MCF 10A (cell line): ENCODE measurements at regions of chr2 and their contacts with region 1.

Region 1: DNA sequence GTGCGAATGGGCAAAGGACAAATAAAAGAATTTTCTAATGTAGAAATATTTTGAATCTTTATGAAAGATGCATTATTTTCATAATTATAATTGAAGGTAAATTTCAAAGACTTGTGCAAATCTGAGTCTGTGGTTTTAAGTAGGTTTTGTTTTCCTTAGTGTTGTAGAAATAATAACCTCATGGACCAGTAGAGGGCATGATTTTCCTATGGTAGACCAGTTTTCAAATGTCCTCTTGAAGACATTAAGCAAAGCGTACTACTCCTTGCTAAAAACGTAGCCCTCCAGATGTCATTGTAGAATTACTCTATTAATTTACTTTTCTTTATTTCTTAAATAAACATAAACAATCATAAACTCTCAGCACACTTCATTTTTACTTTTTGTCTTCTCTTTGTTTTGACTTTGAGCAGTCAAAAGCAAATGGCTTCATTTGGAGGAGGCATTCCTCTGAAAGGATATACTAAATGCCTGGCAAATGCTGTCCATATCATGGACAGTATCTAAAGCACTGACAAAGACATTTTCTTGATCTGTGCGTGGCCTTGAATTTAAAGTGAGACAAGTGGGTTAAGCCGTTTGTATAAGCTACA is 85.8 kb upstream of the FAM237A start:
- DNase-seq: peak; percentile 57
- H3K4me3 Mint-ChIP-seq: no peak overlapping the region
- H3K27ac Mint-ChIP-seq: no peak overlapping the region
- H3K4me1 Mint-ChIP-seq: peaks cover 6% of the 10 kb centered on the region
- H3K27me3 Mint-ChIP-seq: peaks cover 12% of the 10 kb centered on the region
- CTCF ChIP-seq: peak; percentile 49

Region 2: GRCh38 chr2:206392118-206392517 is 164.3 kb before region 1 on chr2:
- CTCF ChIA-PET with region 1: interaction called, 25 read pairs
- POLR2A ChIA-PET with region 1: interaction called, 3 read pairs
- intact Hi-C with region 1: loop called (anchors 1 kb)
- DNase-seq: peak; percentile 64
- H3K4me3 Mint-ChIP-seq: no peak overlapping the region
- H3K27ac Mint-ChIP-seq: no peak overlapping the region
- H3K4me1 Mint-ChIP-seq: no peaks in the 10 kb centered on the region
- H3K27me3 Mint-ChIP-seq: no peaks in the 10 kb centered on the region
- CTCF ChIP-seq: peak; percentile 44

Region 3: GRCh38 chr2:206585335-206585734 is 28.9 kb after region 1 on chr2:
- CTCF ChIA-PET with region 1: interaction called, 13 read pairs
- POLR2A ChIA-PET with region 1: no interaction called
- intact Hi-C with region 1: no loop called
- DNase-seq: no peak
- H3K4me3 Mint-ChIP-seq: no peak overlapping the region
- H3K27ac Mint-ChIP-seq: no peak overlapping the region
- H3K4me1 Mint-ChIP-seq: no peaks in the 10 kb centered on the region
- H3K27me3 Mint-ChIP-seq: no peaks in the 10 kb centered on the region
- CTCF ChIP-seq: no peak

Region 4: DNA sequence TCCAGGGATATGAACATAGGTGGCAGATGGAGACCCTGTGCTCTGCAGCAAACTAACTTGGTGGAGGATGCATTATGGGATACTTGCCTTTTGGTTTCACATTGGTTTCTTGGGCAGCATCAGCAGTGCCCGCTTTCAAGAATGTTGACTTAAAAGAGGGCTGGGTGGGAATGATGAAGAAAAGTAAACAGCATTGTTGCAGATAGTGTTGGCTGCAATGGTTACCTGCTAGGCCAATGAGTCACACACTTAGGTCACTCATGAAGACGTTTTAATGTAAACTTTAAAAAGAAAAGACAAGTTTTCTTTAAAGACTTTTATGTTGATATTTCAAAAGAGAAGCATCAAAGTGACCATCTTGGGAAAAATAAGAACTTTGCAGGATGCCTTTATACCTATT is 59.7 kb after region 1 on chr2:
- CTCF ChIA-PET with region 1: no interaction called
- POLR2A ChIA-PET with region 1: no interaction called
- intact Hi-C with region 1: no loop called
- DNase-seq: peak; percentile 55
- H3K4me3 Mint-ChIP-seq: no peak overlapping the region
- H3K27ac Mint-ChIP-seq: no peak overlapping the region
- H3K4me1 Mint-ChIP-seq: peaks cover 8% of the 10 kb centered on the region
- H3K27me3 Mint-ChIP-seq: no peaks in the 10 kb centered on the region
- CTCF ChIP-seq: no peak

Region 5: GRCh38 chr2:206693399-206694137 is 137.1 kb after region 1 on chr2:
- CTCF ChIA-PET with region 1: interaction called, 15 read pairs
- POLR2A ChIA-PET with region 1: no interaction called
- intact Hi-C with region 1: loop called (anchors 1 kb)
- DNase-seq: peak; percentile 73
- H3K4me3 Mint-ChIP-seq: no peak overlapping the region
- H3K27ac Mint-ChIP-seq: no peak overlapping the region
- H3K4me1 Mint-ChIP-seq: no peaks in the 10 kb centered on the region
- H3K27me3 Mint-ChIP-seq: no peaks in the 10 kb centered on the region
- CTCF ChIP-seq: peak; percentile 70

Region 6: GRCh38 chr2:206765242-206766056 is 209.0 kb after region 1 on chr2 and contains the starts of genes FASTKD2 and MDH1B:
- CTCF ChIA-PET with region 1: interaction called, 4 read pairs
- POLR2A ChIA-PET with region 1: interaction called, 3 read pairs
- intact Hi-C with region 1: loop called (anchors 5 kb)
- DNase-seq: peak; percentile 94
- H3K4me3 Mint-ChIP-seq: peak within 1 kb of the TSS; percentile 85
- H3K27ac Mint-ChIP-seq: peak within 1 kb of the TSS; percentile 97
- H3K4me1 Mint-ChIP-seq: peaks cover 25% of the 10 kb centered on the region
- H3K27me3 Mint-ChIP-seq: no peaks in the 10 kb centered on the region
- CTCF ChIP-seq: no peak
- total RNA-seq, gene FASTKD2: 28.9 and 34.6 TPM in 2 replicates
- total RNA-seq, gene MDH1B: 0.66 and 0.77 TPM in 2 replicates

Region 7: DNA sequence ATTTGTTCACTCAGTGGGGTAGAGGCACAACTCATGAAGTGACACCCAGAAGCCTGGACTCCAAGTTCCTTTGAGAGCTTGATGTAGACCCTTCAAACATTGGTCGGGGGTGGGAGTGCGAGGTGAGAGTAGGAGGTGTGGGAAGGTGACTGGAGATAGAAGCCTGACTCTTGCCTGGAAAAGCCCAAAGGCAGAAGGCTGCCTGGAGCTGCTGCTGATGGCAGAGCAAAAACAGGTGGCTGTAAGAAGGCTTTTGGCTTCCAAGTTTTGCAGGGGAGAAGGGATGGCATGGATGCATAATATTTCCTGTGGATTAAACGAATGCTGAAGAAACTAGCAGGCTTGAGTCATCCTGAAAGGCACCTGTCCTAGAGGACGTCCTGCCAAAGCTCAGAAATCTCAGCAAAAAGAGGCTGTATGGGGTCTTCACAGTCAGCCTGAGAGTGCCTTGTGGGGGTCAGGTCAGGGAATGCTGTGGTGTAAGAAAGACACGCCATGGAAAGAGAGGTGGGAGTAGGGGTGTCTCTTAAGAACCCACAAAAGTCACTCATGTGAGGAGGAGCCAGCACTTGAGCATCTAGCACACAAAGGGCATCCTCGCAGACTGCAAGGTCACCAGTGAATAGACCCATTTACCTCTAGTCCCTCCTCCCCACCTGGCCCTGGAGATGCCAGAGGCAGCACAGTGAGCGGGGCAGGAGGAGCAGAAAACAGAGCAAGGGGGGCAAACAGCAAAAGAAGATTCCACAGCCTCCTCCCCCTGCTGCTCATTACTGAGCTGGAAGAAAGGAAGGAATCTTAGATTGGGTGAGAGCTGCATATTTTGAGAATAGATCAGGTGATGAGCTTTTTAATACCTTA is 246.4 kb after region 1 on chr2:
- CTCF ChIA-PET with region 1: no interaction called
- POLR2A ChIA-PET with region 1: no interaction called
- intact Hi-C with region 1: no loop called
- DNase-seq: no peak
- H3K4me3 Mint-ChIP-seq: no peak overlapping the region
- H3K27ac Mint-ChIP-seq: no peak overlapping the region
- H3K4me1 Mint-ChIP-seq: no peaks in the 10 kb centered on the region
- H3K27me3 Mint-ChIP-seq: no peaks in the 10 kb centered on the region
- CTCF ChIP-seq: no peak

Region 8: GRCh38 chr2:207565736-207566500 is 1009.5 kb after region 1 on chr2:
- CTCF ChIA-PET with region 1: no interaction called
- POLR2A ChIA-PET with region 1: no interaction called
- intact Hi-C with region 1: no loop called
- DNase-seq: no peak
- H3K4me3 Mint-ChIP-seq: no peak overlapping the region
- H3K27ac Mint-ChIP-seq: peak overlapping the region; percentile 46
- H3K4me1 Mint-ChIP-seq: no peaks in the 10 kb centered on the region
- H3K27me3 Mint-ChIP-seq: no peaks in the 10 kb centered on the region
- CTCF ChIP-seq: no peak